ENCODE measurements at regions of chr4 and their contacts with region 1.

Region 1: DNA sequence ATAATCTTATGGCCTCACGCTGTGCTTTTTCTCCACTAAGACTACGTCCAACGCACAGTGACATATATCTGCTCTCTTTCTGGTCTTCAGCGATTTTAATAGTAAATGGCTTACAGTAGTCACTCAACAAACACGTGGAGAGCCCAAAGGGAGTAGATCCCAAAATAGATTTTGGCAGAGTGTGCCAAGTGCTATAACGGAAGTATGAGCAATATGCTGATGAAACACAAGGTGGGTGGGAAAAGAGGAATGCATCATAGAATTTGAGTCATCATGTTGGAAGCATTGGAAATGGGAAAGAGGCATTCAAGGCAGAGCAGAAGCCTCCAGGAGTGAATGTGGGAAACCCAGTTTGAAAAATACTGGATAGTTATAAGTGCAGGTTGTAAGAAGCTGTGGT is 129.1 kb upstream of the LDB2 start:
- DNase-seq: peak in 1 of 2 donors; percentile 70
- H3K4me3 ChIP-seq: no peak overlapping the region
- H3K27ac ChIP-seq: no peak overlapping the region
- H3K4me1 ChIP-seq: no peaks in the 10 kb centered on the region
- H3K27me3 ChIP-seq: no peaks in the 10 kb centered on the region
- CTCF ChIP-seq: no peak

Region 2: GRCh38 chr4:17063888-17064287 is 36.4 kb after region 1 on chr4:
- intact Hi-C with region 1: loop called (anchors 5 kb)
- DNase-seq: no peak
- H3K4me3 ChIP-seq: no peak overlapping the region
- H3K27ac ChIP-seq: no peak overlapping the region
- H3K4me1 ChIP-seq: peaks cover 0 to 3% of the 10 kb centered on the region in 2 donors
- H3K27me3 ChIP-seq: no peaks in the 10 kb centered on the region
- CTCF ChIP-seq: no peak

Measured in ascending aorta (tissue), 2 donors.